AG04450 (cell line): ENCODE measurements at regions of chr7 and their contacts with region 1.

Region 1: DNA sequence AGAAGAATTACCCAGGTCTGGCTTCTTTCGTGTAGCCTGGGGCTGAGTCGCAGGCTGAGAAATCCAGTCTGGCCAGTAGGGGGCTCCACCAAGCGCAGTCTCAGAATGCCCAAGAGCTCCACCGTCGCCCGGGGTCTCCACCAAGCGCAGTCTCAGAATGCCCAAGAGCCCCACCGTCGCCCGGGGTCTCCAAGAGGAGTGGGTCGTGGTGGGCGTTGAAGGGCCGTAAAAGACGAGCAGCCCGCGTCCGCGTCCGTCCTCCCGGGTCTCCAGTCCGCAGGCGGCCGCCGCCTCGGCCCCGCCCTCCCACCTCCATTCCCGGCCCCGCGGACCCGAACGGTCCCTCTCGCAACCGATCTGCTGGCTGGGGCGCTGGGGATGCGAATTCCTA is 895 bp upstream of the ZYX start:
- DNase-seq: peak; percentile 68
- H3K4me3 ChIP-seq: peak overlapping the region; percentile 93
- H3K27ac ChIP-seq: peak overlapping the region; percentile 100
- H3K27me3 ChIP-seq: no peaks in the 10 kb centered on the region
- CTCF ChIP-seq: peak; percentile 89

Region 2: DNA sequence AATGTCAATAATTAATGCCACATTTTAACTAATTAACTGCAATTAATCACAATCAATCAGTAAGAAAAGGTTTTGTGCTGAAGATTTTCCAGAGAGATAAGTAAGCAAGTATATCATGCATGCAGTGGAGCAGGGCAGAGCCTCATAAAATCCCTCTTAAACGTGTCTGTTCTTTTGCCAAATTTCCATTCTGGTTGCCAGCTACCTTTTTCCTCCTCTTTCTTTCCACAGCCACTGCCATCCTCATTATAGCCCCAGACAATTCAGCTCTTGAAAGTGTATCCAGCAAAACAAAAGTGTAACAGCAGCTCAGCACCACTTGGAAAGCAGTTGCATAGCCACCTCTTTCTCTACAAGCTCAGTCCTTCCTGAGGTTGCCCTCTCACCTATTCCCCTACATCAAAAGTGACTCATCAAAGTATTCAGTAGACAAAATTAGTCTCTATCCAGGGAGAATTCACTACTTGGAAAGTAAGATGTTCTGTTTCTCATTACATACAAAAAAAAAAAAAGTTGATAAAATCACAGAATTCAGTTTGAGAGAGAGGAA is 552.2 kb before region 1 on chr7:
- CTCF ChIA-PET with region 1: no interaction called
- POLR2A ChIA-PET with region 1: no interaction called
- DNase-seq: no peak
- H3K4me3 ChIP-seq: no peak overlapping the region
- H3K27ac ChIP-seq: no peak overlapping the region
- H3K27me3 ChIP-seq: no peaks in the 10 kb centered on the region
- CTCF ChIP-seq: no peak

Region 3: DNA sequence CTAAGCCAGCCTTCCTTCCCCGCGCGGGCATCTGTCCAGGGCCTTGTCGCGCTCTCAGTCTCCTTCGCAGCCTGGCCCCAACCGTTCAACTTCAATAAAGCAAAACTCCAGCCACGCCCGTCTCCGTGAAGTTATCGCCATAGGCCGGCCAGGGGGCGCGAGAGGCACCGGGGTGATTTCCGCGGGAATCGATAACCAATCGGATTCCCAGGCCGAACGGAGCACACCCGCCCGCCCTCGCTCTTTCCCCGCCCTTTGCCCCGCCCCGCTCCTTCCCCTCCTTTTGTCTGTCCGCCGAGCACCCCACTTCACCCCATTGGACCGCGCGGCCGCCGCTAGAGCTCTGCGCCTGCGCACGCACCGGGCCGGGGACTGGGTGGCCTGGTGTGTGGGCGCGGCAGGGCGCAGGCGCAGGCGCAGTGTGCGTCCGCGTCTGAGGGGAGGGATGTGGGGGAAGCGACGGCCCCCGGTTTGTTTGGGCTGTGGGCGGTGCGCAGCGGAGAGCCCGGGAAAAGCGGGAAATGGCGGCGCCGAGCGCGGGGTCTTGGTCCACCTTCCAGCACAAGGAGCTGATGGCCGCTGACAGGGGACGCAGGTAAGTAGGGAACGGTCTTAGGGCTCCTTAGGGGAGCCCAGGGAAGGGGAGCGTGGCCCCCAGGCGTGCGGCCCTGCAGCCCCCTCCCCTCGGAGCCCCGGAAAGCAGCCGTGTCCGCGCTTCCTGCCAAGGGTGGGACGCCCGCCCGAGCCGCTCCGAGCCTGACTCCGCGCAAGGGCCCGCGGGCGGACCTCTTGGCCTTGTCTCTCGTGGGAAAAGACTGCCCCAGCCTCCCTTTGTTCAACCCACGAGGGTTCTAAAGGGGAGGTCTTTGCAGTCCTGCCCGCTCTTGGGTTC is 92.1 kb before region 1 on chr7 and contains the start of gene CASP2:
- CTCF ChIA-PET with region 1: interaction called, 11 read pairs
- POLR2A ChIA-PET with region 1: interaction called, 9 read pairs
- DNase-seq: peak; percentile 91
- H3K4me3 ChIP-seq: peak within 1 kb of the TSS; percentile 79
- H3K27ac ChIP-seq: peak within 1 kb of the TSS; percentile 61
- H3K27me3 ChIP-seq: no peaks in the 10 kb centered on the region
- CTCF ChIP-seq: peak; percentile 44
- polyA plus RNA-seq, gene CASP2: 18.6 and 21.8 TPM in 2 replicates

Region 4: DNA sequence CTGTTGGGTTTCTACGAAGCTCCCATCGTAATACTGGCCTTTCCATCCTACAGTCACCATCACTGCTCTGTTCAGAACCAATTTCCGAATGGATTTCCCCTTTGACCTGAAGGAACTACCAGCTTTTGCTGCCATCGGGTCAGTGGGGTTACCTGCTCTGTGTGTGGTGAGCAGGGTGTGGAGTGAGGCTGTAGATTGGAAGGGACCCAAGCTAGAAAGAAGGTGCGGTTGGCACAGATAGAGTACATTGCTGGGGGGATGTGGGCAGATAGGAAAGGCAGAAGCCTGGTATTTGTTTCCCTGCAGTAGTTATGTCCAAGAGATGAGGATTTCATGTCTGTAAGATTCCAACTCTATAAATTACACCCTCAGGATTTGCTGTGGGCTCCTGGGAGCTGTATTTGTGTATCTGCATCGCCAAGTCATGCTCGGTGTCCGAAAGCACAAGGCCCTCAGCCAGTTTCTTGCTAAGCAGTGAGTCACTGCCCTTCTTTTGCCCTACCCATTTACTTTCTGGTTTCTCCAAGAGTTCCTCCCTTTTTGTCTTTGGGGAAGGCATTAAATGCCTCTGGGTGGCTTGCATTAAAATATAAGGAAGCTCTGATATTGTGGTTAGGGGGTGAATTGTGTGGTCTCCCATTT is 49.0 kb before region 1 on chr7:
- CTCF ChIA-PET with region 1: interaction called, 13 read pairs
- POLR2A ChIA-PET with region 1: interaction called, 4 read pairs
- DNase-seq: peak; percentile 77
- H3K4me3 ChIP-seq: no peak overlapping the region
- H3K27ac ChIP-seq: peak overlapping the region; percentile 66
- H3K27me3 ChIP-seq: no peaks in the 10 kb centered on the region
- CTCF ChIP-seq: no peak

Region 5: DNA sequence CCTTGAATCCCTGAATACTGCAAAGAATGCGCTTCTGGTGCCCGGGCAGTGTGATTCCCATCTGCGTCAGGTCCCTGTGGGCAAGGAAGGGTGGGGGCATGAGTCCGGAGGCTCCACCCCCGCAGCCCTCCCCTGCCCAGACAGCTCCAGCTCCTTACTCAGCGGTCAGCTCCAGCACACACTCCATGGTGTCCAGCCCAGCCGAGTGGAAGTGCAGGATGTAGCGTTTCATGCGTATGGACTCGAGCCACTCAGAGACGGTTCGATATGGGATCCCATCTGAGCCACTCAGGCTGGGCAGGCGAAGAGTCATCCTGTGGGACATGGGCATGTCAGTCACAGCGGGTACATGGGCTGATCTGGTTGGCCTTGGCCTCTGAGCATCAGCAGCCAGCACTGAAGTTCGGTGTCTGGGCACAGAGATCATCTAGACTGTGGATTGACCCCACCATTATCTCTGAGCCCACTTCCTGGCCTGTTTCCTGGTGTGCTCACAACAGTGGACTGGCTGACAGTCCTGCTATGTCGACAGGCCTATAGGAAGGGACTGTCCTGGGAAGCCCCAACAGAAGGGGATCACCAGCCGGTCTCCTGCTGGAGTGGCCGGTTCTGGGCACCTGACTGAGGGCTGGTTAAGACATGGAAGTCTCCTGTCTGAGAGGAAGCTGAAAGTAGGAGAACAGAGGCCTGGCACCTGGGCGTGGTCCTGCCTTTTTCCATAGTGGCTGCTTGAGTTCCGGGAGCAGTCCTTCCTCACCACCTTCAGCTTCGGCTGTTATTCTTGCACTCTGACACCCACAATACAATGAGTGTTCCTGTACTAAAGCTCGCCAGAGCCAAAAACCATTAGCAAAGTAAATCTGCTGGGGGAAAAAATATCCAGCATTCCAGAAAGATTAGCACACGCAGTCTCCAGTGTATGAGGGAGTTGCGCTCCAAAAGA is 11.5 kb after region 1 on chr7:
- CTCF ChIA-PET with region 1: interaction called, 10 read pairs
- POLR2A ChIA-PET with region 1: interaction called, 83 read pairs
- DNase-seq: peak; percentile 63
- H3K4me3 ChIP-seq: no peak overlapping the region
- H3K27ac ChIP-seq: peak overlapping the region; percentile 86
- H3K27me3 ChIP-seq: no peaks in the 10 kb centered on the region
- CTCF ChIP-seq: no peak

Region 6: DNA sequence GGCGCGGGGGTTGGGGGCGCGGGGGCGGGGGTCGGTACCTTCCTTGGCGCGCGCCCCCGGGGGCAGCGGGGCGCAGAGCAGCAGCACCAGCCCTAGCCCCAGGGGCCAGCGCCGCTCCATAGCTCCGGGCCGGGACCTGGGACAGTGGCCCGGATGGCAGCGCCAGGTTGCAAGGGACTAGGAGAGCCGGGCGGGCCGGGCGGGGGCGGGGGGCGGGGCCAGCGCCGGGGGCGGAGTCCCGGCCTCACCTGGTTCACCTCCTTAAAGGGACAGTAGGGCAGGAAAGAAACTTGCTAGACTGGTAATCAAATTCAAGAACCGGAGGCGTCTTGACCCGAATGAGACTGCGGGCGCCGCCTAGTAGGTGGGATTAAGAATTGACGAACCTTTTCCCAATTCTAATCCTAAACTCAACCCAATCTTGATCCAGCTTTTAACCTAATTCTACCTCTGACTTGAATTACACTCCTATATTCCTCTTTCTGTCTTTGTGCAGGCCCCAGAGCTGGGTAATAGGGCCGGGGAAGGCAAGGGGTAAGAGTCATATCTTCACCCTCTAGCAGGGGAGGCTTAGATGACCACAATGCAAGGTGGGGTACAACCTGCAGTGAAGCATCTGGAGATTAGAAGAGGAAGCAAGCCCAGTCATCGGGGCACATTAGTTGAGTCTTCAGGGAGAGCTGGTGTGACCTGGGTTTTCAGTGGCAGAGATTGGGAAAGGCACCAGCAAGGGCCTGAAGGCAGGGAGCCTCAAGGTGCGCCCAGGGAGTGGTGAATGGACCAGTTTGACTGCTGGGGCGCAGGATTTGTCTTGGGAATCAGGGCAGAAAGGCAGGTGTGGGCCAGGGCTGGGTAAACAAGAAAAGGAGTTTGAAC is 28.7 kb after region 1 on chr7 and contains the start of gene EPHA1:
- CTCF ChIA-PET with region 1: interaction called, 32 read pairs
- POLR2A ChIA-PET with region 1: interaction called, 5 read pairs
- DNase-seq: no peak
- H3K4me3 ChIP-seq: no peak within 1 kb of the TSS
- H3K27ac ChIP-seq: no peak within 1 kb of the TSS
- H3K27me3 ChIP-seq: peaks cover 13% of the 10 kb centered on the region
- CTCF ChIP-seq: peak; percentile 25
- polyA plus RNA-seq, gene EPHA1: 0.09 TPM in 1 of 2 replicates, not detected in the other